ENCODE measurements at regions of chr4 and their contacts with region 1.

Region 1: DNA sequence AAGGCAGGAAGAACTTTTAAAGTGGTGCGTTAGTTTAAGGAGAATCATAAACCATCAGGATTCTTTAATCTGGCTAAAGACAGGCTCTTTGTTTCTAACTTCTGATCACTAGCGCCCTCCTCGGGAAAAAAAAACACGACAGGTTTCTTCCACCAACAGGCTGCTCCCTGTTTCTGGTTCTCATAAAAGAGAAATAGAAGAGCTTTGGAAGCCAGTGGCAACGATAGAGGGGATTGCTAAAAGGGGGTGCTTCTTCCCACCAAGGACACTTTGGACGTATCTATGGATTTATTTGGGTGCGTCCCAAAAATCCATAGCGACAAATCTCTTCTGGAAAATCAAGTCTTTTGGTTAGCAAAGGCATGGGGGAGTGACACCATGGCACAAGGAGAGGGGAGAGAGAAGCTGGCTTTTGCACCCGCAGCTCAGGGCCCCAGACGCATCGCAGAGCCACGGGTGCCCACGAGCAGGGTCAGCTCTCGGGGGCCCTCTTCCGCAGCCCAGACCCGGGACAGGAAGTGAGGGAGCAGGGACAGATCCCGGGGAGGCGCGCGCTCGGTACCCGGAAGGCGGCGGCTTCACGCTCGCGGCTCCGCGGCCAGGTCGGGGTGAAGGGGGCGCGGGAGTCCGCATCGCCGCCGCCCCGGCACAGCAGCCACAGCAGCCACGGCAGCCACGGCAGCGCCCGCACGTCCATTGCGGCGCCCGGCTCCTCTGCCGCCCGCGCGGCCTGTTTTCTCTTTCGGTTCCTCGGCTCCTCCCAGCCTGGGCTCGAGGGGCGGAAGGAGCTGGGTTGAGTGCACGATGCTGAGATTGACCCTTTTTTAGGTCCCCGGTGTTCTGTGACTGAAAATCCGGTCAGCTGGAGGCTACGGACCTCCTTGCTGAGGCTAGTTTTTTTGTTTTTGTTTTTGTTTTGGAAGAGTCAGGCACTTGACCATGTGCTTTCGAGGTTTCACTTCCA is at the start of gene CTSO:
- DNase-seq: peak; percentile 76
- H3K4me3 ChIP-seq: peak within 1 kb of the TSS; percentile 84
- H3K27ac ChIP-seq: peak within 1 kb of the TSS; percentile 98
- H3K4me1 ChIP-seq: peaks cover 7% of the 10 kb centered on the region
- H3K27me3 ChIP-seq: no peaks in the 10 kb centered on the region
- CTCF ChIP-seq: peak; percentile 45
- total RNA-seq, gene CTSO: 3.3 to 14.7 TPM

Region 2: DNA sequence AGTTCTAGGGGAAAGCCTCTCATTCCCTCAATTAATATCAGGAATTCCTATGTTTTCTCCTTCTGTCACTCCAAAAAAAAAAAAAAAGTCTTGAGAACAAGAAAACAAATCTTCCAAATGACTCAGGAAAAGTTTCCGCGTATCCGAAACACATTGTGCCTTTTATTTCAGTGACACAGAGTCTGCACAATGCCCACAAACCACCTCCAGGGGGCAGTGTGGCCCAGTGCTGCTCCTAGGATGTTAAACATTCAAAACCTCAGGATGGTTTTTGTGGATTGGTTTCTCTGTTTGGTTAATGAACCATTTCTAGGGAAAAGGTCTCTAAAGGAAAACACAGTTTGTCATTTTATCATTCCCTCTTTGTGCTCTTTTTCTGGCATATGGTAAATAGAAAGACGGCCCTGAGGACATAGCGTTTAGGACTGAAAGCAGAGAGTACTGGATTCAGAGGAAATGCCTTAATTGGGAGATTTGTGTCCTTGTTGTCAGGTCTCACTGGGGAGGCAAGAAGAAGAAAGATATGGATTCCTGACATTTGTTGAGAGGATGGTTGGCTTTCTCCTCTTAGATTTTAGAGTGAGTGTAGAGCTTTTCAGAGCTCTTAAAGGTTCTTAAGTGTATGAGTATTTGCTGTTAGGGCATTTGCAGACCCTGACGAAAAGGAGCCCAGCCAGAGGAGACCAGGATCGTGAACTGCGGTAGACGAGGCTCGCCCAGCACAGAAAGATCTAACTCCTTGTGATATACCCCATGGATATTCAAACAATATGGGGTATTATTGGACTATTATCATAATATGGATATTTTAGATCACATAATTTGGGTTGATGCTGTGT is 510.9 kb before region 1 on chr4:
- intact Hi-C with region 1: loop called (anchors 10 kb)
- DNase-seq: peak; percentile 79
- H3K4me3 ChIP-seq: no peak overlapping the region
- H3K27ac ChIP-seq: no peak overlapping the region
- H3K4me1 ChIP-seq: no peaks in the 10 kb centered on the region
- H3K27me3 ChIP-seq: no peaks in the 10 kb centered on the region
- CTCF ChIP-seq: peak; percentile 97

Region 3: GRCh38 chr4:155809835-155810234 is 143.6 kb before region 1 on chr4:
- intact Hi-C with region 1: loop called (anchors 5 kb)
- DNase-seq: no peak
- H3K4me3 ChIP-seq: no peak overlapping the region
- H3K27ac ChIP-seq: no peak overlapping the region
- H3K4me1 ChIP-seq: no peaks in the 10 kb centered on the region
- H3K27me3 ChIP-seq: no peaks in the 10 kb centered on the region
- CTCF ChIP-seq: peak; percentile 61

Measured in colonic mucosa (tissue), 4 donors.